ENCODE measurements at regions of chr4 and their contacts with region 1.

Region 1: DNA sequence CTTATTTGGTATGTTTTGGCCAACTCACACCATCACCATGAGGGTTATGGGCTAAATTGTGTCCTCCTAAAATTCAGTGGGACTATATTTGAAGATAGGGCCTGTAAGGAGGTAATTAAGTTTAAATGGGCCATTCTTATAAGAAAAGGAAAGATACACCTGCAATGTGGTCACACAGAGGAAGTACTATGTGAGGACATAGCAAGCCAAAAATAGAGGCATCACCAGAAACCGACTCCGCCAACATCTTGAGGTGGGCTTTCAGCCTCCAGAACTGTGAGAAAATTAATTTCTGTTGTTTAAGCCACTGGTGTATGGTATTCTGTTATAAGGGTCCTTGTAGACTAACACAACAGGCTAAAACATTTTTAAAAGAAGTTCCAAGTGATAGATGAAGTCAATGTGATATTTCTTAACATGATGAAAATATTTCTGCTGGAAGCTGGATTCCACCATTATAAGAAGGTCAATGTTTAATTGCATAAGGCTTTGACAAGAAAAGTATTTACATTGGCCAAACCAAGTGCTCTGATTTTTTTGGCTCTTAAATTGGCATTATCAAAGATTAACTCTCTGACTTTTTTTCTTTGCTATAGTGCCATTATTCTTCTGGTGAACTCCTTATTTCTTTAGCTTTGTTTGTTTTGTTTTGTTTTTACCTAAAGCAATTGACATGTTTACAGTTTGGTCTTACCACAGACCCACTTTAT is 540.9 kb downstream of the PPARGC1A start:
- DNase-seq: peak; percentile 54
- H3K4me3 ChIP-seq: no peak overlapping the region
- H3K27ac ChIP-seq: peak overlapping the region; percentile 31
- H3K4me1 ChIP-seq: peaks cover 20% of the 10 kb centered on the region
- CTCF ChIP-seq: no peak

Region 2: DNA sequence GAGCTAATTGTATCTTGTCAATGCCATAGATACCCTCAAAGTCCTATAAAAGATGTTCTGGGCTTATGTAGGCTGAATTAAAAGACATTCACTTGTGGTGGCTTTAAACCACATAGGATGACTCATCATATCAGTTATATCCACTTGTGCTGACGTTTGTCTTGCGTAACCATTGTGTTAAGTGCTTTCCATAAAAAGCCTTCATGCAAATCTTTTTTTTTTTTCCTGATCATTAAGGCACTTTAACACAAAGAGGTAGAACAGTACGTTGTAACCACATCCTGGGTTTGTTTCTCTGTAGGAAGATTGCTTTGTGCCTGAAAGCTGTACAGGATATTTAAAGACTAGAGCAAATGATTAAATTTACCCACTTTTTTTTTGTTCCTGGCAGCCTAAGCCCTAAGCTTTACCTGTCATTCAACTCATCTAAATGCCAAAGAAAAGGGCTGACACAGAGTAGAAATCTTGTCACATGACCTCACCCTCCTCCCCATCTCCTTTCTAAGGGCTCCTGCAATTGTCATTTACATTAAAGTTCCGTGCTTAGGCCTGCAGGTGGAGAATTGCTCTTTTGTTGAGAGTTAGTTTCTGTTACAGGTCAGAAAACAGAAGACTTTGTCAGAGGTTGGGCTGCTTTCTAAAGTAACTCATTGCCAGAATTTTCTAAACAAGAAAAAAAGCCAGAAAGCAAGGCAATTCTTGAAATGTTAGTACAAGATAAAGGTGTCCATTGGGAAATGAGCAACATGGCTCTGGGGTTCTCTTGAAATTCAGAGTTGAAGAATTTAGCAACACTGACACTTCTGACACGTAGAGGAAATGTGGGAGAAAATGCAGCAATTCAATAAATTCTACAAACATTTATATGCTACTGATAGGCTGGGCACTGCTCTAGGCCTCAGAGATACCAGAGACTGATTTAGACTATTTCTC is 14.7 kb before region 1 on chr4:
- CTCF ChIA-PET with region 1: no interaction called
- POLR2A ChIA-PET with region 1: no interaction called
- intact Hi-C with region 1: loop called (anchors 2 kb)
- DNase-seq: peak; percentile 90
- H3K4me3 ChIP-seq: peak overlapping the region; percentile 36
- H3K27ac ChIP-seq: peak overlapping the region; percentile 91
- H3K4me1 ChIP-seq: peaks cover 61% of the 10 kb centered on the region
- CTCF ChIP-seq: peak; percentile 76

Region 3: DNA sequence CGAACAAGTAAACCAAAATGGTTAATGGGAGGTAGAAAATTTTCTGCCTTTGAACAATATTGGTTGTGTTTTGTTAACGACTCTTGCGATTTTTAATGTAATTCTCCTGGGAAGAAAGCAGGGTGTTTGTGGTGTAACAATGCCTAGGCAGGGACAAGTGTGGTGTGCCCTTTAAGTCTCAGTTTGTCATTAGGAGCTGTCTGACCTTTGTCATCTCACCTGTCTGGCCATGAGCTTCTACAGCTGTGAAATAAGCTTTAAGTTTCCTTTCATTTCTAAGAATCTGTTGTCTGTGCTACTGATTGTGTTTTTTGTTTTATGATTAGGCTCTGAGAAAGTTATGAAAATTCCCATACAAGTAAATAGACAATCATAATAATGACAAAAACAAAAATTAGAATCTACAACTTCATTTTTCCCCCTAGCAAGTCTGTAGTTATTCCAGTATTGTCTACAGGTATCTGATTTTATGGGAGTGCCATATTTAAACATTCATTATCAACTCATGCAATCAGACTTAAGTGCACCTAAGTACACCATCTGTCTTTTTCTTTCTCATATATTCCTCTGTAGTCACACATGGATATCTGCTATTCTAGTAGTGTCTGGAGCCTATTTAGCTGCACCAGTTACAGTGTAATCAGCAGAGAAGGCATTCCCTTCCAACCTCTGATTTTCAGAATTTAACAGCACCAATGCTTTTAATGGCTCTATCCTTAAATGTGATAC is 337.4 kb after region 1 on chr4:
- CTCF ChIA-PET with region 1: no interaction called
- POLR2A ChIA-PET with region 1: no interaction called
- intact Hi-C with region 1: no loop called
- DNase-seq: no peak
- H3K4me3 ChIP-seq: no peak overlapping the region
- H3K27ac ChIP-seq: no peak overlapping the region
- H3K4me1 ChIP-seq: no peaks in the 10 kb centered on the region
- CTCF ChIP-seq: no peak

Measured in OCI-LY7 (cell line).